Psoas muscle (tissue), 8 donors: ENCODE measurements at regions of chr4 and their contacts with region 1.

Region 1: GRCh38 chr4:183905081-183905592 is at the start of gene STOX2:
- DNase-seq: peak; percentile 78 to 88
- ATAC-seq: peak; percentile 92 to 97 (median 95)
- H3K4me3 ChIP-seq: peak within 1 kb of the TSS; percentile 78
- H3K27ac ChIP-seq: peak within 1 kb of the TSS; percentile 78
- H3K4me1 ChIP-seq: peaks cover 11% of the 10 kb centered on the region
- H3K27me3 ChIP-seq: peaks cover 0 to 14% (median 0%) of the 10 kb centered on the region in 3 donors
- CTCF ChIP-seq: no peak
- total RNA-seq, gene STOX2: 1.7 to 9.3 (median 3.9) TPM

Region 2: DNA sequence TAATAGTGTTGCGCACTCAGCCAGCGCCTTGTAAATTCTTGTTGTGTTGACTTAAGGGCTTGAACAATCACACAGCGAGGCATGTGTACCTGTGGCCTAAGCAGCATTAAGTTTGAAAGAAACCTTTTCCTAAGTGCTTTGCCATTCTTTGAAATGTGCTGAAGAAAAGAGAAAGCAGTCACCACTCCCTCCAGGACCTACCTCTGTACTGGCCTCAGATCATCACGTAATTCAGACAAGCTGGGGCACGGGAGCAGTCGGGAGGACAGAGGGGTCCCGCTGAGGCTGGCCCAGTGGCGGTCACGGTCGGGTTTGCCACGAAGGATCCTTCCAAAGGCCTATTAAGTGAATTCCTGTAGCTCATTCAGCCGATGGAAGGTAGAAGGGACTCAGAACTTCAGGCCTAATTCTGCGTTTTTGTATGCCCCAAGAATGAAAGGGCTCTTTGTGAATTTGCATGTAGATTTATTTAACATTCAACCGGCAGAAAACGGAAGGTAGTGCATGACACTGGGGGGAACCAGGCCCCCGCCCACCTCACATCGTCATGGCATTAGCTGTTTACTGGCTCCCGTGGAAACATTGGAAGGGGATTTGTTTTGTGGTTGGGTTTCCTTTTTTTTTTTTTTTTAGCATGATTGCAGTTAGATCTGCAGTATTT is 139.8 kb before region 1 on chr4:
- intact Hi-C with region 1: no loop called
- DNase-seq: peak in 1 of 2 donors; percentile 54
- ATAC-seq: no peak
- H3K4me3 ChIP-seq: peak overlapping the region; percentile 27
- H3K27ac ChIP-seq: peak overlapping the region; percentile 42
- H3K4me1 ChIP-seq: no peaks in the 10 kb centered on the region
- H3K27me3 ChIP-seq: no peaks in the 10 kb centered on the region
- CTCF ChIP-seq: no peak

Region 3: DNA sequence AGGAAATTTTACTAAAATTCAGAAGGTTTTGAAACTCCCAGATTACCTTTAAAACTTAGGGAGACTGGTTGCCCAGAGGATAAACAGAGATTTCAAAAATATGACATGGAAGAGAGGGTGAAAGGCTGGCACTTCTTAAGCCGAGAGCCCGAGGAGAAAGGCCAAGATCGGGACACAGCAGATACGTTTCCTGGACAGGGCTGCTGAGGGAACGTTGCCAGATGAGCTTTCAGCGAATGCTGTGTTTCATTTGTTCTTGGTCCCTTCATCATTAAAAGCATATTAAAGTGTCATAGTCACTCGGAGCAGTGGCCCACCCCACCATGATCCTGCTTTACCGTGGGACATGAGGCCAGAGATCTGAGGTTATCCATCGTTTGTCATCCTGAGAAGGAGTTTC is 37.9 kb before region 1 on chr4:
- intact Hi-C with region 1: loop called in 1 of 2 experiments (anchors 2 kb)
- DNase-seq: no peak
- ATAC-seq: no peak
- H3K4me3 ChIP-seq: no peak overlapping the region
- H3K27ac ChIP-seq: no peak overlapping the region
- H3K4me1 ChIP-seq: no peaks in the 10 kb centered on the region
- H3K27me3 ChIP-seq: no peaks in the 10 kb centered on the region
- CTCF ChIP-seq: no peak

Region 4: GRCh38 chr4:183987987-183988392 is 82.9 kb after region 1 on chr4:
- intact Hi-C with region 1: loop called in 1 of 2 experiments (anchors 5 kb)
- DNase-seq: peak; percentile 59 to 77
- ATAC-seq: peak; percentile 95 to 96 (median 96)
- H3K4me3 ChIP-seq: peak overlapping the region; percentile 59
- H3K27ac ChIP-seq: peak overlapping the region; percentile 82
- H3K4me1 ChIP-seq: peaks cover 6% of the 10 kb centered on the region
- H3K27me3 ChIP-seq: no peaks in the 10 kb centered on the region
- CTCF ChIP-seq: no peak